ENCODE measurements at regions of chr22 and their contacts with region 1.

Region 1: DNA sequence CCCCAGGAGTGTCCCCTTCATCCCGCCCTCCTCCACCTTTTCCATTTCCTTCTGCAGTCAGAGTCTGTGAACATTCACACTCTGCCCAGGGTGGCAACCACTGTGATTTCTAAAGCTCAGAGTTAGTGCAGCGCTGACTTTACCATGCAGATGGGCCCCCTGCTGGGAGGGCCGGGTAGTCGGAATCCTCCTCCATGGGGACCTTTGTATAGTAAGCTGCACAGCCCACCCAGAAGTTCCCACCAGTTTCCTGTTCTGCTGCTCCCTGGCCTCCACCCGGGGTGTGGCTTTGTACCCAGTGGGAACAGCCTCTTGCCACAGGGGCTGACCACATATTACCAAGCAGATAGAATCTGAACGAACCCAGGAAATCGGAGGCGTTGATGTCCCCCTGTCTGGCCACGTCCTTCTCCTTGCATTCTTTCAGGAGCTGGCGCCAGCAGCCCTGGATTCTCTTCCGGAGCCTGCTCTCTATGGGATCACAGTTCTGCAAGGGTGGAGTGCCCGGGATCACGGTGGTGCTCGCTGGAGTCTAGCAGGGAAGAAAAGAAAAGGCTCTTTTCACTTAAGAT is 125.3 kb downstream of the MPPED1 start:
- DNase-seq: no peak

Region 2: GRCh38 chr22:43446916-43447315 is 90.2 kb before region 1 on chr22:
- in situ Hi-C with region 1: loop called (anchors 25 kb)
- DNase-seq: peak; percentile 9

Region 3: DNA sequence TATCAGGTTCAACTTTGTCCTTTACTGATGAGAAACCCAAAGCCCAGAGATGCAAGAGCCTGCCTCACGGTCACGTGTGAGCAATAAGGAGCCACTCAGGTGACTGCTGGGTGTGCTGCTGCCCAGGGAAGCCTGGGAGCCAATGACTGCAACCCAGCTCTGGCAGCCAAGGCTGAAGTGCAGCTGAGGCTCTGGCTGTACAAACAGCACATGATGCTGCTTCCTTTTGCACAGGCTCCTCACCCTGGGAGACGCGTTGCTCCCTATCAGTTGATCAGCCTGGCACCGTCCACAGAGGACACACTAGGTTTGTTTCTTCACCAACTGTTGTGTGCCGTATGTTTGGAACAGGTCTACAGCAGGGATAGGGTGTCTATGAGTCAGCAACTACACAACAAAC is 106.3 kb after region 1 on chr22:
- in situ Hi-C with region 1: loop called (anchors 25 kb)
- DNase-seq: no peak

Measured in G401 (cell line).